HepG2 (cell line): ENCODE measurements at regions of chr7 and their contacts with region 1.

Region 1: GRCh38 chr7:155412537-155413253 is 45.2 kb upstream of the EN2 start:
- DNase-seq: peak; percentile 42
- ATAC-seq: peak; percentile 88
- H3K4me3 ChIP-seq: no peak overlapping the region
- H3K27ac ChIP-seq: no peak overlapping the region
- H3K4me1 ChIP-seq: no peaks in the 10 kb centered on the region
- H3K27me3 ChIP-seq: peaks cover 2 to 57% of the 10 kb centered on the region in 2 experiments
- CTCF ChIP-seq: peak; percentile 83
- EP300 ChIP-seq: no peak
- POLR2A ChIP-seq: no peak
- RAD21 ChIP-seq: peak; percentile 16; the same call in 1 of the 2 replicates

Region 2: DNA sequence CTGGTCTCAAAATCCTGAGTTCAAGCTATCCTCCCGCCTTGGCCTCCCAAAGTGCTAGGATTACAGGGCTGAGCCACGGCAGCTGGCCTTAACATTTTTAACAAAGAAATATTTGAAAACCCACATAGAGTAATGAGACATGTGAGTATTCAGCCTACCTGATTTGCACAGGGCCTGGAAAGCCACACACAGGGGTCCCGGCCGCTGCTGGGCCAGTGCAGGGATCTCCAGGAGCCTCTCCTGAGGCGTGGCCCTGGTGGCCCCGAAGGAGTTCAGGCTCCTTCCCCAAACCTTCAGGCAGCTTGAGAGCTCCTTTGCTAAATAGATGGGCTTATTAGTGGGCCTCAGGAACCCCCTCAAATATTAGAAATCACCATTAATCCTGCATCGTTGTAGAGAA is 115.0 kb after region 1 on chr7:
- CTCF ChIA-PET with region 1: no interaction called
- POLR2A ChIA-PET with region 1: no interaction called
- in situ Hi-C with region 1: no loop called
- intact Hi-C with region 1: no loop called
- DNase-seq: no peak
- ATAC-seq: no peak
- H3K4me3 ChIP-seq: no peak overlapping the region
- H3K27ac ChIP-seq: no peak overlapping the region
- H3K4me1 ChIP-seq: peaks cover 14% of the 10 kb centered on the region
- H3K27me3 ChIP-seq: peaks cover 3 to 67% of the 10 kb centered on the region in 2 experiments; a peak in 4 of 5 replicates
- CTCF ChIP-seq: no peak
- EP300 ChIP-seq: no peak
- POLR2A ChIP-seq: no peak
- RAD21 ChIP-seq: no peak

Region 3: GRCh38 chr7:155543011-155543876 is 130.5 kb after region 1 on chr7:
- CTCF ChIA-PET with region 1: no interaction called
- POLR2A ChIA-PET with region 1: no interaction called
- in situ Hi-C with region 1: no loop called
- intact Hi-C with region 1: no loop called
- DNase-seq: peak; percentile 34
- ATAC-seq: peak; percentile 80
- H3K4me3 ChIP-seq: no peak overlapping the region
- H3K27ac ChIP-seq: no peak overlapping the region
- H3K4me1 ChIP-seq: no peaks in the 10 kb centered on the region
- H3K27me3 ChIP-seq: peaks cover 8 to 81% of the 10 kb centered on the region in 2 experiments; a peak in 4 of 5 replicates
- CTCF ChIP-seq: peak; percentile 67
- EP300 ChIP-seq: no peak
- POLR2A ChIP-seq: no peak
- RAD21 ChIP-seq: peak; percentile 55

Region 4: DNA sequence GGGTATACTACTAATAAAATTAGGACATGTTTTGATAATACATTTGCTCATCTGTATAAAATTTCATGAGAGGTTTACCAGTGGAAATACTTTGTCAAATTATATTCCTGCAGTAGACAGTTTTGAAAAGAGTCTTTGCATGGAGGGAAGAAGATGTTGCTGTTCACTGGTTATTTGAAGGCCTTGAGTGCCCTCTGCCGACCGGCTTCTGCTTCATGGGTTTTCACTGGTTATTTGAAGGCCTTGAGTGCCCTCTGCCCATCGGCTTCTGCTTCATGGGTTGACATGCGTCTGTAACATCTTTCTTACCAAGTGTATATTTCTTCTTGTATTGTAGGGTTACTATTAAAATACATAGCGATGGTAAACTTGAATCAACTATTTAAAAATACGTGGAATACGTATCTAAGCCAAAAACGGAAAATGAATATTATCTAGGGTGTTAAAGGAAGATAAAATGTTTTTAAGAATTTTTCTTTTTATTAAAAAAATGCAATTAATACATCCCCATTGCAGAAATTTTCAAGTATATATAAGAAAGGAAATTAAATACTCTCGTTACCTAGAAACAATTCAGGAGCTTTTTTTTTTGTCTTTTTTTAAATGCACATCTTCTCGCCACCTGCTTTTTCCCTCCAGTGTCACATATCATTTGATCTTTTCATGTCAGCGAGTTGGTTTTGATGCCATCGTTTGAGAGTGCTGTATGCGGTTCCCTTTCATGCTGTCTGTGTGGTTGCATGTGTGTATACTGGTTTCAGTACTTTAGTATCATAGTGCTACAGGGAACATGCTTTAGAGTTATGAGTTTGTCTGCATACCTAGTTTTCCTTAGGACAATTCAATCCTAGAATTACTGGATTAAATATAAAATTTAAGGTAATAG is 326.2 kb after region 1 on chr7:
- CTCF ChIA-PET with region 1: no interaction called
- POLR2A ChIA-PET with region 1: no interaction called
- in situ Hi-C with region 1: no loop called
- intact Hi-C with region 1: loop called (anchors 10 kb)
- DNase-seq: peak; percentile 74
- ATAC-seq: peak; percentile 90
- H3K4me3 ChIP-seq: no peak overlapping the region
- H3K27ac ChIP-seq: no peak overlapping the region
- H3K4me1 ChIP-seq: no peaks in the 10 kb centered on the region
- H3K27me3 ChIP-seq: no peaks in the 10 kb centered on the region
- CTCF ChIP-seq: peak; percentile 84
- EP300 ChIP-seq: no peak
- POLR2A ChIP-seq: no peak
- RAD21 ChIP-seq: peak; percentile 80

Region 5: GRCh38 chr7:155763691-155764437 is 351.2 kb after region 1 on chr7:
- CTCF ChIA-PET with region 1: interaction called, 4 read pairs
- POLR2A ChIA-PET with region 1: no interaction called
- in situ Hi-C with region 1: no loop called
- intact Hi-C with region 1: loop called (anchors 10 kb)
- DNase-seq: no peak
- ATAC-seq: no peak
- H3K4me3 ChIP-seq: no peak overlapping the region
- H3K27ac ChIP-seq: no peak overlapping the region
- H3K4me1 ChIP-seq: no peaks in the 10 kb centered on the region
- H3K27me3 ChIP-seq: no peaks in the 10 kb centered on the region
- CTCF ChIP-seq: no peak
- EP300 ChIP-seq: no peak
- POLR2A ChIP-seq: no peak
- RAD21 ChIP-seq: no peak